CD4-positive, alpha-beta memory T cell (primary cell): ENCODE measurements at regions of chr9 and their contacts with region 1.

Region 1: DNA sequence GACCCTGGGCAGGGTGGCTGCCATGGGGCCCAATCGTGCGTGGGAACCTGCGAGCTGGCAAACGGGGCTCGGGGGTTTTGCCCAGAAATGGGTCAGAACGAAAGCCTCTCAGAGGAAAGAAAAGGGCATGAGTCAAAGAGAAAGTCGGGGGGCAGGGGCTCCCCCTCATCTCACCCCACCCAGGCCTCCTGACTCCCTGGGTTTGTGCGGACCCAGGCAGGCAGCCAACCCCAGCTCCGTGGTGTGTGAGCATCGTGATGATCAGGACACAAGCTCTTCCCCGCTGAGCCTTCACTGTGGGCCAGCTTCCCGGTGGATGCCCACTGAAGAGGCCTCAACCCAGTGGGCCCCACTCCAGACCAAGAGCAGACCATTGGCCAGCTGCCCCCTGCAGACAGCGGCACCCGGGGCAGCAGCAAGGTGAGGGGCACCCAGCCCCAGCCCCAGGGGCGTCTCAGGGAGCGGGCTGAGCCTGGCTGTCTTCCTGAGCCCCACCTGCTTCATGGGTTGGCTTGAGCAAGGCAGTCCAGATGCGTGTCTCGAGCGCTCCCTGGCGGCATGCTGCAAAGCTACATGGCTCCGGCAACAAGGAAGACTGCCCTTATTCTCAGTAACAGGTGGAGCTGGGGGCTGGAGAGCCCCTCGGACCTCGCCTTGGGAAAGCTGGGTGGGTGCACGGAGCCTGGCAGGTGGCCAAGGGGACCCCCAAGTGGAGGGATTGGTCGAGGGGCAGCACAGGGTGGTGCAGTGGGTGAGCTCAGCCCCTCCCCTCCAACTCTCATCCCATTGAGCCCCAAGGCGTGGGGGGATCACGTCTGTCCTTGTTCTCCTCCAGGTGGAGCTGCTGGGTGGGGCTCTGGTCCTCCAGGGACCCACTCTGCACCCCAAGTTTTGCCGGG is 3.2 kb upstream of the FUT7 start:
- DNase-seq: peak; percentile 85 to 87 (median 85)
- H3K4me3 ChIP-seq: peak overlapping the region; percentile 34 to 42
- H3K4me3 Mint-ChIP-seq: peak overlapping the region; percentile 73 to 85 (median 80)
- H3K27ac ChIP-seq: peak overlapping the region; percentile 60
- H3K27ac Mint-ChIP-seq: peak overlapping the region; percentile 69 to 91 (median 84)
- H3K4me1 ChIP-seq: peaks cover 50% of the 10 kb centered on the region
- H3K4me1 Mint-ChIP-seq: peaks cover 20 to 46% (median 33%) of the 10 kb centered on the region in 4 donors
- H3K27me3 ChIP-seq: no peaks in the 10 kb centered on the region
- H3K27me3 Mint-ChIP-seq: no peaks in the 10 kb centered on the region

Region 2: DNA sequence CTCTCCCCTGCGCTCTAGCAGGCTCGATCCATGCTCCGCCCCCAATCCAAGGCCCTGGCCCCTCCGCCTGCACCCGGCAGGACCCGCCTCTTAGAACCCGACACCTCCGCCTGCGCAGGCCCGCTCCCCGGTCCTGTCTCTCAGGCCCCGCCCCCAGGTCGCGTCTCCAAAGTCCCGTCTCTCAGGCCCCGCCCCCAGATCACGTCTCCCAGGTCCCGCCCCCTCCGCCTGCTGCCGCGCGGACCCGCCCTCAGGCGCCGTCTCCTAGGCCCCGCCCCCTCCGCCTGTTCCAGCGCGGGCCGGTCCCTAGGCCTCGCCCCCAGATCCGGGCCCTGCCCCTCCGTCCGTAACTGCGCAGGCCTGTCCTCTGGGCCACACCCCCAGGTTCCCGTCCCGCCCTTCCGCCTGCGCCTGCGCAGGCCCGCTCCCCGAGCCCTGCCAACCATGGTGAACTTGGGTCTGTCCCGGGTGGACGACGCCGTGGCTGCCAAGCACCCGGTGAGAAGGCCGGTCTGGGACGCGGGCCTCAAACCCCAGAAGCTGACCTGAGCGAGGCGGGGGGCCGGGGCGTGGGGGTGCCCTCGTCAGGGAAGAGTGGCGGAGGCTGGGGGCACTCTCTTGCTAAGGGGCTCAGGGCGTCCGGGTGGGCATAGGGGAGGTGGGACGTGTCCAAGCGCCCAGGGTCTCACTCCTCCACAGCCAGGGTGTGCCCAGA is 244.0 kb before region 1 on chr9 and contains the start of gene TMEM141:
- CTCF ChIA-PET with region 1: interaction called, 64 read pairs
- POLR2A ChIA-PET with region 1: interaction called, 13 read pairs
- intact Hi-C with region 1: loop called (anchors 1 kb)
- DNase-seq: peak; percentile 99 to 100 (median 99)
- H3K4me3 ChIP-seq: peak within 1 kb of the TSS; percentile 61 to 86
- H3K4me3 Mint-ChIP-seq: peak within 1 kb of the TSS; percentile 81 to 88 (median 85)
- H3K27ac ChIP-seq: peak within 1 kb of the TSS; percentile 93
- H3K27ac Mint-ChIP-seq: peak within 1 kb of the TSS; percentile 91 to 98 (median 95)
- H3K4me1 ChIP-seq: peaks cover 31% of the 10 kb centered on the region
- H3K4me1 Mint-ChIP-seq: peaks cover 8 to 42% (median 24%) of the 10 kb centered on the region in 4 donors
- H3K27me3 ChIP-seq: no peaks in the 10 kb centered on the region
- H3K27me3 Mint-ChIP-seq: no peaks in the 10 kb centered on the region
- total RNA-seq, gene TMEM141: 51.1 to 53.4 TPM

Region 3: DNA sequence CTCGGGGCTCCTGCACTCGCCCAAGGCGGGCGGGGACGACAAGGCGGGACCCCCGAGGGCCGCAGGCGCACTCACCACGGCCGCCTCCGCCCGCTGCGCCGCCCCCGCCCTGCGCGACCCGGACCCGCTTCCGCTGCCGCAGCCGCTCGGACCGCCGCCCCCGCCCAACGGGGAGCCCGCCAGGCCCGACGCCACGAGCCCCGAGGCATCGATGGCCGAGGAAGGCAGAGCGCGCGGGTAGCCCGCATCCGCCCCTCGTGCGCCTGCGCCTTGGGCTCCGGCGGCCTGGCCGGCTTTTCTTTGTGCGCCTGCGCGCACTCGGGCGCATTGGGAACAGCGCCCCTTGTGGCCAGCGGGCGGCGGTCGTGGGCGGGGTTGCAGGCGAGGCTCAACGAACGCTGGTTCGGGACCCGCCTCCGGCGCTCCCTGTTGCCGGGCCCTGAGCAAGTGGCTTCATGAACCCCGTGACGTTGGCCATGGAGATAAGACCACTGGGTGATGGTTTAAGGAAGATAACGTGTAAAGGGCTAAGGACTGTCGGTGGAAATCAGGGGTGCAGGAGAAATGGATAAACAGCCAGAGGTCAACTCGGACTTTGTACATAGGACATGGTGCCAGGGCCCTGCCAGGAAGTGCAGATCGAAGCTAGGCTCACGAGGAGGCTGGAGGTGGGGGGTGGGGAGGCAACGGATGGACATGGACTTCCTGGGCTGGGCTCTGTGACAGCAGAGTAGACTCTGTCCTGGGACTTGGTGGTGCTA is 90.4 kb before region 1 on chr9 and contains the starts of genes C8G and FBXW5:
- CTCF ChIA-PET with region 1: interaction called, 84 read pairs
- POLR2A ChIA-PET with region 1: interaction called, 25 read pairs
- intact Hi-C with region 1: loop called (anchors 1 kb)
- DNase-seq: peak; percentile 89 to 97 (median 96)
- H3K4me3 ChIP-seq: peak within 1 kb of the TSS in 1 of 2 donors; percentile 70
- H3K4me3 Mint-ChIP-seq: peak within 1 kb of the TSS; percentile 75 to 88 (median 85)
- H3K27ac ChIP-seq: peak within 1 kb of the TSS; percentile 59
- H3K27ac Mint-ChIP-seq: peak within 1 kb of the TSS; percentile 66 to 90 (median 81)
- H3K4me1 ChIP-seq: peaks cover 23% of the 10 kb centered on the region
- H3K4me1 Mint-ChIP-seq: peaks cover 3 to 17% (median 9%) of the 10 kb centered on the region in 4 donors
- H3K27me3 ChIP-seq: no peaks in the 10 kb centered on the region
- H3K27me3 Mint-ChIP-seq: no peaks in the 10 kb centered on the region
- total RNA-seq, gene C8G: 2.2 TPM
- total RNA-seq, gene FBXW5: 122 to 123 TPM

Region 4: DNA sequence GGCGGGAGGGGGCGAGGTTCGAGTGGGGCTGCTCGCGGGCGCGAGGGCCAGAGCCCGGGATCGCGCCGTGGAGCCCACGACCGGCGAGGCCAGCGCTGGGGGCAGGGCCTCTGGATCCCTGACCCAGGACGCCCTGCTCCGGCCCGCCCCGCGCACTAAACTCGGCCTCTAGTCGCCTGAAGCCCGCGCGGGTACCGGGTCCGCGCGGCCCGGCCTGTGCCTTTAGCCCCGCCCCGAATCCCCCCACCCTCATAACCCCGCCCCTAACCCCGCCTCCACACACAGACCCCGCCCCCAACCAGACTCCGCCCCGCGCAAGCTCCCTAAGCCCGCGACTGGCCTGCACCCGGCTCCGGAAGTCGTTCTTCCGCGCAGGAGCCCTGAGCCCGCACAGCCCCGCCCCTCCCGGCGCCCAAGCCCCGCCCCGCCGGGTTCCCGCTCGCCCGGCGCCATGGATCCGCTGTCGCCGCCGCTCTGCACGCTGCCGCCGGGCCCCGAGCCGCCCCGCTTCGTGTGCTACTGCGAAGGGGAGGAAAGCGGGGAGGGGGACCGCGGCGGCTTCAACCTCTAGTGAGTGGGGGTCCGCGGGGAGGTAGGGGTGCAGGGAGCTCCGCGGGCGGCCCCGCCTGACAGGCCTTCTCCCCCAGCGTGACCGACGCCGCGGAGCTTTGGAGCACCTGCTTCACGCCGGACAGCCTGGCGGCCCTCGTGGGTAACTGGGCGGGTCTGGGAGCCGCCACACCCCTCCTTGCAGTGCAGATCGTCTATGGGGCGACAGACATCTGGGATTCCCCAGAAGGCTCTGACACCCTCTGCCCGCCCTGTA is 42.9 kb before region 1 on chr9 and contains the start of gene PAXX:
- CTCF ChIA-PET with region 1: interaction called, 21 read pairs
- POLR2A ChIA-PET with region 1: interaction called, 52 read pairs
- intact Hi-C with region 1: no loop called
- DNase-seq: peak; percentile 92 to 93 (median 93)
- H3K4me3 ChIP-seq: peak within 1 kb of the TSS; percentile 86 to 90
- H3K4me3 Mint-ChIP-seq: peak within 1 kb of the TSS; percentile 84 to 92 (median 88)
- H3K27ac ChIP-seq: peak within 1 kb of the TSS; percentile 85
- H3K27ac Mint-ChIP-seq: peak within 1 kb of the TSS; percentile 83 to 94 (median 88)
- H3K4me1 ChIP-seq: peaks cover 41% of the 10 kb centered on the region
- H3K4me1 Mint-ChIP-seq: peaks cover 4 to 41% (median 20%) of the 10 kb centered on the region in 4 donors
- H3K27me3 ChIP-seq: no peaks in the 10 kb centered on the region
- H3K27me3 Mint-ChIP-seq: peaks cover 0 to 5% of the 10 kb centered on the region in 2 donors
- total RNA-seq, gene PAXX: 94.2 to 101 TPM

Region 5: DNA sequence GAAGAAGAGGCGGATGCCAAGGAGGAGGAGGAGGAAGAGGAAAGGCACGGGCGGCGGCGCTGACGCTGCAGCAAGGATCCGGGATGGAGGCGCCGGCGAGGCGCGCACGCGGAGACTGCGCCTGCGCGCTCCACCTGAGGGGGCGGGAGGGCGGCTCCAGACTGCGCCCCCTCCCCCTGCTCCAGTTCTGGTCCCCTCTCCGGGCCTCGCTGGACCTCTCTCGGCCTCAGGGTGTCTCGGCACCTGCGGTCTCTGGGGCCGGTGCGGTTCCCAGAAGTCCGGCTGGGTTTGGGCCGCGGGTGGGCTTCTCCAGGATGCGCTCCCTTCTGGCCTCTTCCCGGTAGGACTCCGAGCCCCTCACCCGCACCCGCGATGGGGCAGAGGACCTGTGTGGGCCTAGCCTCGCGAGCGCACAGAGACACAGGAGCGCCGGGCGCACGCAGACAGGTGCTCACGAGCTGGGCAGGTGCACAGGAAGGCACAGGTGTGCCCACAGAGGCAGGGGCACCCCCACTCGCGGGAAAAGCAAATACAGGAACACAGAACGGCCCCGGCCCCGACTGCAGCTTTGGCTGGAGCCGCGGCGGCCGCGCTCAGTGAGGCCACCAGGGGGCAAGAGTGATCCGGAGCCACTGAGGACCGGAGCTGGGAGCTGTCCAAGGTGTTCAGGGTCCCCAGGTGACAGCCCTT is 11.1 kb after region 1 on chr9 and contains the start of gene NPDC1:
- CTCF ChIA-PET with region 1: interaction called, 32 read pairs
- POLR2A ChIA-PET with region 1: interaction called, 10 read pairs
- intact Hi-C with region 1: no loop called
- DNase-seq: peak; percentile 72 to 79 (median 77)
- H3K4me3 ChIP-seq: peak within 1 kb of the TSS in 1 of 2 donors; percentile 72
- H3K4me3 Mint-ChIP-seq: peak within 1 kb of the TSS; percentile 72 to 88 (median 82)
- H3K27ac ChIP-seq: no peak within 1 kb of the TSS
- H3K27ac Mint-ChIP-seq: peak within 1 kb of the TSS in 3 of 7 donors; percentile 52 to 84 (median 53)
- H3K4me1 ChIP-seq: peaks cover 37% of the 10 kb centered on the region
- H3K4me1 Mint-ChIP-seq: peaks cover 3 to 22% (median 9%) of the 10 kb centered on the region in 4 donors
- H3K27me3 ChIP-seq: peaks cover 32% of the 10 kb centered on the region
- H3K27me3 Mint-ChIP-seq: peaks cover 15 to 19% of the 10 kb centered on the region in 2 donors
- total RNA-seq, gene NPDC1: 20.7 to 21.4 TPM

Region 6: DNA sequence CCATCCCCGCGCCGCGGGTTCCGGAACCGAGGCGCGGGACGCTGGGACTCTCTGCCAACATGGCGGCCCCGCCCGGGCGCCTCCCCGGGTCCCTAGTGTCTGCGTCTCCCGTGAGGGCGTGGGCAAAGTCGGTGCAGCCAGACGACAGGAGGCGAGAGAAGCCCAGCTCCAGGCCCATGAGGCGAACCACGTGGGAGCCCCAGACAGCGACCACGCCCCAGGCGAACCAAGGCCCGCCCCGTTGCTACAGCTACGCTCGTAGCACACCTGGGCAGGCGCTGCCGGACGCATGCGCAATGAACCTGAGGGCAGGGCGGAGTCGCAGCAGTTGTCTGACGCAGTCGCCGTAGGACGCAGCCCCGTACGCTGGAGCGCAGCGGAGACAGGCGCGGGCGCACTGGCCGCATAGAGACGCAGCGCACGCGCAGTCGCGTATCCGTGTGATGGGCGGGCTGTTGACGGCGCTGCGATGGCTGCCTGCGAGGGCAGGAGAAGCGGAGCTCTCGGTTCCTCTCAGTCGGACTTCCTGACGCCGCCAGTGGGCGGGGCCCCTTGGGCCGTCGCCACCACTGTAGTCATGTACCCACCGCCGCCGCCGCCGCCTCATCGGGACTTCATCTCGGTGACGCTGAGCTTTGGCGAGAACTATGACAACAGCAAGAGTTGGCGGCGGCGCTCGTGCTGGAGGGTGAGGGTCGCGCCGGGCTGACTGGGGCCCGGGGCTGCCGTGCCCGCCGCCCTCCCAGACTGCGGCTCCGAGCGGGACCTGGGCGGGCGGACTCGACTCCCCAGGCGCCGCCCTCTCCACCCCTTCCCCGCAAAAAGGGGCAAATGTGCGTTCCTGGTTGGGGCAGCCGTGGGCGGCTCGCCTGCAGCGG is 51.7 kb after region 1 on chr9 and contains the start of gene MAN1B1:
- CTCF ChIA-PET with region 1: interaction called, 8 read pairs
- POLR2A ChIA-PET with region 1: interaction called, 15 read pairs
- intact Hi-C with region 1: no loop called
- DNase-seq: peak; percentile 98 to 100 (median 100)
- H3K4me3 ChIP-seq: peak within 1 kb of the TSS; percentile 81 to 82
- H3K4me3 Mint-ChIP-seq: peak within 1 kb of the TSS; percentile 88 to 93 (median 90)
- H3K27ac ChIP-seq: peak within 1 kb of the TSS; percentile 92
- H3K27ac Mint-ChIP-seq: peak within 1 kb of the TSS; percentile 90 to 99 (median 96)
- H3K4me1 ChIP-seq: peaks cover 29% of the 10 kb centered on the region
- H3K4me1 Mint-ChIP-seq: peaks cover 17 to 37% (median 28%) of the 10 kb centered on the region in 4 donors
- H3K27me3 ChIP-seq: no peaks in the 10 kb centered on the region
- H3K27me3 Mint-ChIP-seq: no peaks in the 10 kb centered on the region
- total RNA-seq, gene MAN1B1: 63.3 to 71.0 TPM